Uterus (tissue), 4 donors: ENCODE measurements at regions of chr2 and their contacts with region 1.

Region 1: GRCh38 chr2:28751252-28751955 is at the start of gene PPP1CB:
- DNase-seq: peak; percentile 96 to 97
- H3K4me3 ChIP-seq: peak within 1 kb of the TSS; percentile 97 to 98
- H3K27ac ChIP-seq: peak within 1 kb of the TSS; percentile 100
- H3K4me1 ChIP-seq: peaks cover 0 to 6% of the 10 kb centered on the region in 2 donors
- H3K27me3 ChIP-seq: no peaks in the 10 kb centered on the region
- CTCF ChIP-seq: peak in 3 of 4 experiments; percentile 11 to 48 (median 21)
- POLR2A ChIP-seq: peak; percentile 88 to 98
- total RNA-seq, gene PPP1CB: 366 to 610 (median 470) TPM

Region 2: DNA sequence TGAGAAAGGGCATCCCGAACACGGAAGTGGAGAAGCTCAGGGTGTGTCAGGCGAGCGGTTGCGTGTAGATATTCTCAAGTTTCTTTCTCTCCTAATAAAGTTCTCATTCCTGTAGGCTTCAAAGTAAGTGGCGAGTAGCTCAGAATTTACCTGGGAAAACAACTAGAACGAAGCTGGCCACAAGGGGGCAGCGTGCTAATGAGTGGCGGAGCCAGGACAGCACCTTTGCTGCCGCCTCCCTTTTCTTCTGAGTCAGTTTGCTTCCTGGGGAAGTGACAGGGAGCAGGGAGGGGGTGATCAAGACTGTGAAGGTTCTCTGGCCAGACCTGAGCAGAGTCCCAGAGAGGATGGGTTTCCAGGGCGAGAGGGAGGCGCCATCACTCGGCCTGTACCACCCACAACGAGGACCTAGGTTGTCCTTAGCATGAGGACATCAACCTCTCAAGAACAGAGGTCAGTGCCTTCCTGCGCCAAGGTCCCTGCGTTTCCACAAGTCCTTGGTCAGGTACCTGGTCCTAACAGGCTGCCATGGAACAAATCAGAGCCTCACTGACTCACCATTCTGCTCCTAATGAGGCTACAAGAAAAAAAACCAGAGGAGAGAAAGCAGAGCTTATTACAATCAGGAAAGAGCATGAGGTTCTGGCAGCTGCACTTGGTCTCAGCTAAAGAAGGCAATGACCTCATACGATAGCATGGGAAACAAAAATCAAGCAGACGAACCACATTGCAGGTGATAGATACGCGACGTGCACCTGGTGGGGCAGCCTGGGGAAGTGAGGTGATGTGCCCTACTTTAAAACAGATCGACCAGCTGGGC is 156.9 kb before region 1 on chr2:
- intact Hi-C with region 1: loop called (anchors 10 kb)
- DNase-seq: peak; percentile 92 to 96
- H3K4me3 ChIP-seq: no peak overlapping the region
- H3K27ac ChIP-seq: peak overlapping the region; percentile 94 to 98
- H3K4me1 ChIP-seq: no peaks in the 10 kb centered on the region
- H3K27me3 ChIP-seq: no peaks in the 10 kb centered on the region
- CTCF ChIP-seq: peak; percentile 88 to 92 (median 90)
- POLR2A ChIP-seq: peak in 1 of 2 donors; percentile 48

Region 3: DNA sequence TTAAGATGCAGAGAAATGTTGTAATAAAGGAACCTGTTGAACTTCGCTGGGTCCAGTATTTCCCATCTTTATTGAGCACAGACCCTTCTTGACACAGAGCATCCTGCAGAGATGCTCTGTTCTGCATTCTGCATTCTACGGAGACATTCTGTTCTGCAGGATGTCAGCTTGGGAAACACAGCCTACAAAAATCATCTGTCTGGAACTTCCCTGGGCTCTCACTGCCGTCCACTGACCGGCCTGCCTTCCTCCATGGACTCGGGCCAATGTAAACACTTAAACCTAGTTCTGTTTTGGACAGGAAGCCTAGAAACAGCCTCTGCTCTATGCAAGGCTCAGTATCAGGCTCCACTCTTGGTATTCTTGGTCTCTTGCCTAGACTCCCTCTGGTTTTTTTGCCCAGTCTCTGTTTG is 89.8 kb before region 1 on chr2:
- intact Hi-C with region 1: loop called (anchors 5 kb)
- DNase-seq: peak; percentile 76 to 92
- H3K4me3 ChIP-seq: no peak overlapping the region
- H3K27ac ChIP-seq: peak overlapping the region; percentile 89 to 92
- H3K4me1 ChIP-seq: peaks cover 14 to 26% of the 10 kb centered on the region in 2 donors
- H3K27me3 ChIP-seq: no peaks in the 10 kb centered on the region
- CTCF ChIP-seq: peak in 1 of 4 experiments; percentile 6
- POLR2A ChIP-seq: no peak

Region 4: GRCh38 chr2:28929581-28929980 is 178.2 kb after region 1 on chr2:
- intact Hi-C with region 1: no loop called
- DNase-seq: no peak
- H3K4me3 ChIP-seq: no peak overlapping the region
- H3K27ac ChIP-seq: no peak overlapping the region
- H3K4me1 ChIP-seq: no peaks in the 10 kb centered on the region
- H3K27me3 ChIP-seq: no peaks in the 10 kb centered on the region
- CTCF ChIP-seq: no peak
- POLR2A ChIP-seq: no peak

Region 5: GRCh38 chr2:28972778-28973340 is 221.5 kb after region 1 on chr2:
- intact Hi-C with region 1: no loop called
- DNase-seq: no peak
- H3K4me3 ChIP-seq: no peak overlapping the region
- H3K27ac ChIP-seq: no peak overlapping the region
- H3K4me1 ChIP-seq: no peaks in the 10 kb centered on the region
- H3K27me3 ChIP-seq: no peaks in the 10 kb centered on the region
- CTCF ChIP-seq: no peak
- POLR2A ChIP-seq: no peak